Esophagus muscularis mucosa (tissue), 4 donors: ENCODE measurements at regions of chr20 and their contacts with region 1.

Region 1: DNA sequence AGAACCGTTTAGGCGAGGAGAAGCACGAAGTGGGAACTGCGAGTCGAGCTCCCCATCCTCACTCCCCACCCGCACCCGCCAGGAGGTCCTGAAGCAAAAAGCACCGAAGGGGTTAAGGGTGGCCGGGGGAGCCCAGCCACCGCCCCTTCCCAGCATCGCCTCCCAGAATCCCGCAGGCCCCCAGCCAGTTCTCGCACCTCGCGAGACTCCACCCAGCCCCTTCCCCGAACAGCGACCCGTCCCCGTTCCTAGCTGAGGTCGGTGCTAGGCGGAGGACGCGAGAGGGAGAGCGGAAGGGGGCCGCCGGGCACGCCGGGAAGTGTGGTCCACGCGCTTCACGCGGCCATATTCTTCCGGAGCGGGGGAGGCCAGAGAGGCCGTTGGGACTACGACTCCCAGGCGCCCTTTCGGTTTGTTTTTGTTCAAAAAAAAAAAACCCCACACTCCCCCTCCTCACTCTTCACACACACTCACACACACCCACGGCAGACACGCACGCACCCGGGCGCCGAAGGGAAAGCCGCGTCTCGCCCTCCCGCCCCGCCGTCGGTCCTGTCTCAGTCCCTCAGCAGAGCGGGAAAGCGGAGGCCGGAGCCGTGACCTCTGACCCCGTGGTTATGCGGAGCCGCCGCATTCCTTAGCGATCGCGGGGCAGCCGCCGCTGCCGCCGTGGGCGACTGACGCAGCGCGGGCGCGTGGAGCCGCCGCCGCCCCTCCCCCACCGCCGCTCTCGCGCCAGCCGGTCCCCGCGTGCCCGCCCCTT is at the start of gene ASXL1:
- DNase-seq: peak; percentile 98
- H3K4me3 ChIP-seq: peak within 1 kb of the TSS; percentile 86 to 98 (median 90)
- H3K27ac ChIP-seq: peak within 1 kb of the TSS; percentile 95 to 98 (median 97)
- H3K4me1 ChIP-seq: peaks cover 28 to 73% (median 57%) of the 10 kb centered on the region in 4 donors
- H3K27me3 ChIP-seq: no peaks in the 10 kb centered on the region
- CTCF ChIP-seq: no peak
- EP300 ChIP-seq: no peak
- POLR2A ChIP-seq: no peak
- total RNA-seq, gene ASXL1: 56.5 to 66.7 (median 61.8) TPM

Region 2: GRCh38 chr20:32456869-32457478 is 98.9 kb after region 1 on chr20:
- intact Hi-C with region 1: loop called (anchors 10 kb)
- DNase-seq: no peak
- H3K4me3 ChIP-seq: peak overlapping the region; percentile 53 to 67 (median 59)
- H3K27ac ChIP-seq: peak overlapping the region in 2 of 4 donors; percentile 43 to 46
- H3K4me1 ChIP-seq: peaks cover 18 to 40% (median 31%) of the 10 kb centered on the region in 4 donors
- H3K27me3 ChIP-seq: no peaks in the 10 kb centered on the region
- CTCF ChIP-seq: peak; percentile 75 to 89 (median 81)
- EP300 ChIP-seq: no peak
- POLR2A ChIP-seq: no peak

Region 3: GRCh38 chr20:32484958-32485769 is 127.1 kb after region 1 on chr20:
- intact Hi-C with region 1: loop called (anchors 5 kb)
- DNase-seq: no peak
- H3K4me3 ChIP-seq: peak overlapping the region; percentile 78 to 95 (median 92)
- H3K27ac ChIP-seq: peak overlapping the region; percentile 81 to 94 (median 89)
- H3K4me1 ChIP-seq: peaks cover 26 to 45% (median 41%) of the 10 kb centered on the region in 4 donors
- H3K27me3 ChIP-seq: no peaks in the 10 kb centered on the region
- CTCF ChIP-seq: peak; percentile 86 to 91 (median 86)
- EP300 ChIP-seq: no peak
- POLR2A ChIP-seq: no peak